ENCODE measurements at regions of chr16 and their contacts with region 1.

Region 1: DNA sequence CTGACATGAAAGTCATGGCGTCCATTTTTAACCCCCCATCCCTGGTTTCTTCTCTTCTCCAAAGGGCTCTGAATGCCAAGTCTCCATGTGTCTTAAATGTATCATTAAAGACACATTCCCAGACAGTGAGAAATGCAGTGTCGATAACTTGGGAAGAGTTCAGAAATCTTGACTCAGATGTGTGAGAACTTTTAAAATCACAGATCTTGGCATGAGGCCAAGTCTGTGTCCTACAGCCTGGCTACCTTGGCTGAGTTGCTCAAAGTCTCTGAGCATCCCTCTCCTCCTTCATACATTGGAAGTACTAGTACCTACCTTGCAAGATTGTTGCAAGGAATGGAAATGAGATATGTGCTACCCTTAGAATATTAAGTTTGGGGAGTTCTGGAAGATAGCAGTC is 1046.5 kb upstream of the RBFOX1 start:
- DNase-seq: no peak
- ATAC-seq: no peak

Region 2: GRCh38 chr16:6125483-6126259 is 160.5 kb before region 1 on chr16:
- intact Hi-C with region 1: no loop called
- DNase-seq: no peak
- ATAC-seq: no peak

Region 3: DNA sequence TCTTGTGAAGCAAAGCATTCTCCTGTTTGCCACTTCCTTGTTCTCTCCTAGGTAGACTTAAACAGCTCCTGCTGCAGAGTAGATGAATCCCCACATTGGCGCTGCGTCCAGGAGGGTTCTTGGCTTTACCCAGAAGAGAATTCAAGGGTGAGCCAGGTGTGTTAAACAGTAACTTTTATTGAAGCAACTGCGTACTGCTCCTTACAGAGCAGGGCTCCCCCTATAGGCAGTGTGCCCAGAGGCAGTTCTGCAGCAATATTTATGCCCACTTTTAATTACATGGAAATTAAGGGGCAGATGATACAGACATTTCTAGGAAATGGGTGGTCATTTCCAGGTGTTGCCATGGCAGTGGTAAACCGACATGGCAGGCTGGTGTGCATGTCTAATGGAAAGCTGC is 58.9 kb after region 1 on chr16:
- intact Hi-C with region 1: loop called in 1 of 2 experiments (anchors 10 kb)
- DNase-seq: no peak
- ATAC-seq: no peak